ENCODE measurements at regions of chr5 and their contacts with region 1.

Region 1: GRCh38 chr5:38441453-38442246 is 114.8 kb downstream of the LIFR start:
- DNase-seq: peak; percentile 79
- CTCF ChIP-seq: peak; percentile 97

Region 2: GRCh38 chr5:38420691-38421390 is 20.8 kb before region 1 on chr5:
- CTCF ChIA-PET with region 1: interaction called, 39 read pairs
- POLR2A ChIA-PET with region 1: no interaction called
- DNase-seq: peak; percentile 29
- CTCF ChIP-seq: peak; percentile 41

Region 3: DNA sequence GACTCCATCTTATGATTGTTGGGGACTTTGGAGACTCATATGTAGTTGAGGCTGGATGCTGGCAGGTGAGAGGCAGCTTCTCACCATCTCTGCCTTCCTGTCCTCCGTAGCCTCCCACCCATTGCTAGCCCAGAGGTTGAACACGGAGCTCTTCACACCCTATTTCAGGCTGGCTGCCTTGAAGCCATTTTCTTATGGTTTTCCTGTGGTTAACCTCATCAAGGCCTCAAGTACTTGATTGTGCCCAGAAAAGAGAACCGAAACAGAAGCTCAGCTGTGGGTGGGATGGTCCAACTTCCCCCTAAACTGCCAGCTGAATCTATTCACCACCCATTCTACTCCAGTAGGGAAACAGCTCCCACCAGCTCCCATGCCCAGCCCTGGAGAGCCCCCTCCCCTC is 11.9 kb after region 1 on chr5:
- CTCF ChIA-PET with region 1: interaction called, 54 read pairs
- POLR2A ChIA-PET with region 1: no interaction called
- DNase-seq: peak; percentile 66
- CTCF ChIP-seq: no peak

Region 4: DNA sequence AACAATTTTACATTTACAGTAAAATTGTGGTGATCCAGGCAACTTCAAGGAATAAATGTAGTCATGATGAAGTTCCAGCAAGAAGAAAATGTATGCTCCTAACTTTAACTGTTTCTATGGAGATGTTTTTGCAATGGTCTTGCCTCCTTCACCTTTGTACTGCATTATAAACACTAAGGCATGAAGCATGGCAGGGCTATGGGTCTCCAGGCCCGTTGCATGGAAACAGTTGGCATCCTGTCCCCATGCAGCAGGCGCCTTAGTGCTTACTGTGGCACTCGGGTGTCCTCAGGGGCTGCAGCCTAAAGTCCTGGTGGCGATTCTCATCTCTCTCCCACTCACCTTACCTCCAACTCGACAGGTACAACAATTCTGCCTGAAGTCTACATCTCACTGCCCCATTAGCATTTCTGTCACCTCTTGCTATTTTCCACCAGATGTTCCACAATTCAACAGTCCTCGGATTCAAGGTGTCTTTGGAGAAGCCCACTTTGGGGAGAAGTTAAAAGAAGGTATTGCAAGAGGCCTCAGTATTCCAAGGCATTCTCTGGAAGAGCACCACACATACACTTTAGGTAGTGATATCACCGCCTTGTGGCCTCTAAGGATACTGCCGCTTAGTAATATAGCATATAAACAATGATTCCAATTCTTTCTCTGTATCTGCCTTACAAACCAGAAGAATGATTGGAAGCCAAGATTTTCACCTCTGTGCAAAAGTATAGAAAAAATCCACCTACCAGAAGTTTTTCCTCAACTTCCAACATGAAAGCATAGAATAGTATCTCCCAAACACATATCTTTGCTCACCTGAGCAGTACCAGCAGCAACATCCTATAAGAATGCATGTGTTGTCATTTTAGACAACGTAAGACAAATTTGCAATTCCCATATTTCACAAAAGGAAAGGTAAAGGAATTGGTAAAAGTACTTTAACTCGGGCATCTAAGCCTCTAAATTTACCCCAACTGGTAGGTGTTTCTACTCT is 109.7 kb after region 1 on chr5:
- CTCF ChIA-PET with region 1: interaction called, 23 read pairs
- POLR2A ChIA-PET with region 1: no interaction called
- DNase-seq: peak; percentile 20
- CTCF ChIP-seq: peak; percentile 25

Region 5: DNA sequence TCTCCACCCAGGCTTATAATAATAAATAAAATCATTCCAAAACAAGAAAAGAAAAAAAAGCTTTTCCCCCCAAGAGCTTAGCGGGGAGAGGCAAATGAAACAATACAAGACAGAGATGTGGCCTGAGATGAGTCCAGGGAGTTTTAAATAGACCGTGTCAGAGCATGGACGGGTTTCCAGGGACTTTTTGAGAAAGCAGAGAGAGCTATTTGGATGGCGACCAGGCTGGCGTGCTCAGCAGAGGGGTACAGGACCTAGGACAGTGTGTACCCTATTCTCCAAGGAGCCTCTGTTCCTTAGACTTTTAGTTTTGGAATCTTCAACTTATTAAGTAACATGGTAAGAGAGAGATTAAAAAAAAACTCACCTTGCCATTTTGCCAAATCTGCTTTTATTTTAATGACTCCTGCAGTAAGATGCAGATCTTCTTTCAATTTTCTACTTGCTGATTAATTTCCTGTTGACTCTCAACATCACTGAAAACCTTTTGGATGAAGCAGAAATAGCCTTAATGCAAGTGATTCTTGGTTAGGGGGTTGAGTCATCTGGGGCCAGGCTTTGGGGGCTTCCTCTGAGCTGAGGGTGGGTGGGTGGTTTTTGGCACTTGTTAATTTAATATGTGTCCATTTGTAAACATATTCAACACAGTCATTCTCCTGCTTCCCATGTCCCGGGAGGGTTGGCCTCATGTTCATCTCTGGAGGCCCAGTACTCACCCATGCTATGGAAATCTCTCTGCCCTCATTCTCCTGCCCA is 354.5 kb after region 1 on chr5:
- CTCF ChIA-PET with region 1: interaction called, 12 read pairs
- POLR2A ChIA-PET with region 1: no interaction called
- DNase-seq: no peak
- CTCF ChIP-seq: no peak

Region 6: DNA sequence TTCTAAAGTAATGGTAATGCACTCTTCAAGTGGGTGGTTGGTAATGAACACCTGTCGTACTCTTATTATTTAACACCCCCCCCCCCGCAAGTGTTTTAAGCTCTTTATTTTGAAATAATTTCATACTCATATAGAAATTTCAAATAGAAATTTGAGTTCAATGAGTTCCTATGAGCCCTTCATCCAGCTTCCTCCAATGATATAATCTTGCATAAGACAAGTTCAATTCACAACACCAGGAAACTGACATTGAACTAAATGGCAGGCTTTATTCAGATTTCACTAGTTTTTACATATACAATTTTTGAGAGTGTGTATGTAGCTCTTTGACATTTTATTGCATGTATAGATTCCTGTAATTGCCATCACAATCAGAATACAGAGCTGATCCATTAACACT is 373.2 kb after region 1 on chr5:
- CTCF ChIA-PET with region 1: interaction called, 94 read pairs
- POLR2A ChIA-PET with region 1: no interaction called
- DNase-seq: no peak
- CTCF ChIP-seq: no peak

Region 7: DNA sequence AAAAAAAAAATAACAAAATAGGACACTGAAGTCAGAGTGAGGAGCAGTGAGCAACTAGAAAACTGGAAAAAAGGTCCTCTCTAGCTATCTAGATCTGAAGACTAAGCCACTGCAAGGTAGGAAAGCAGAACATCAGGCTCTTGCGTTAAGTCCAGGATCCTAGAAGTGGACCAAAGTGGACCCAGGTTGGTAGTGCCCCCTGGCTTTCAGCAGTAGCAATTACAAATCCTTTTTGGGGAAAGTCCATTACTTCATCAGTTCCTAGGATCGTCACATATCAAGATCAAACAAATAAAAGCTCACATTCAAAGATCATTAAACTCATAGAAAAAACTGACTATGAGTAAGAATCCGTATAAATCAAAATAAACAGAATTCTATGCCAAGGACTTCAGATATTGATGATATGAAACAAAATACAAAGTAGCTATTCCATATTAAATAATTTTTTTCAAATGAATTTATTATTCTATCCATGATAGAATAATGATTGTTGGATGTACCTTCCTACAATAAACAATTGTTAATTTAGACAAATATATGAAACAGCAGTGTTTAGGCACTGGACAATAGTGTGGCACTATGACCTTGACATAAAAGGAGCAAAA is 639.1 kb after region 1 on chr5:
- CTCF ChIA-PET with region 1: interaction called, 26 read pairs
- POLR2A ChIA-PET with region 1: no interaction called
- DNase-seq: peak; percentile 40
- CTCF ChIP-seq: peak; percentile 59

Region 8: DNA sequence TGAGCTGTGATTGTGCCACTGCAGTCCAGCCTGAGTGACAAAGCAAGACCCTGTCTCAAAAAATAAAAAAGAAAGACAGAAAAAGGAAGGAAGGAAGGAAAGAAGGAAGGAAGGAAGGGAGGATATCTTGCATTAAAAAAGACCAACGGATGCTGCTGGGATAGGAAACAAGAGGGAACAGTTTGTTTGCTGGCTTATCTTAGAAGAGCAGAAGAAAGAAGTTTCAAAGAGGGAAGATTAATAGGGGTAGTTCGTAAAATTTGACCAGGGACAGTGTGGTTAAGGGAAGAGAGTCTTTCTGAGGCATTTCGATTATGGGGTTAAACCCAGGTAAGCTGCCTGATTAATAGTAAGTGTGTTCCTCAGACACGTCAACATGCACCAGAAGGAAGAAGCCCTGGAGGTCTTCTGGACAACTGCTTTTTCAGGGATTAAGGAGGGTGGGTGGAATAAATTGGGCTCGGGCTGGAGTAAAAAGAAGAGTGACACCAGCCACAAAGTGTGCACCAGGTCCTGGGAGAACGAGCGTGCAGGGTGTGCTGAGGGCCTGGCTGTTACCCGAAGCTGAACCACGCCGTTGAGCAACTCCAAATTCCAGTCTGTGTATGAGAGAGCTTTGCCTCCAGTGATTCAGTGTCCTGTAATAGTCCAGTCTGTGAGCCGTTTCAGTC is 753.0 kb after region 1 on chr5:
- CTCF ChIA-PET with region 1: no interaction called
- POLR2A ChIA-PET with region 1: no interaction called
- DNase-seq: no peak
- CTCF ChIP-seq: no peak